AG04449 (cell line): ENCODE measurements at regions of chr15 and their contacts with region 1.

Region 1: DNA sequence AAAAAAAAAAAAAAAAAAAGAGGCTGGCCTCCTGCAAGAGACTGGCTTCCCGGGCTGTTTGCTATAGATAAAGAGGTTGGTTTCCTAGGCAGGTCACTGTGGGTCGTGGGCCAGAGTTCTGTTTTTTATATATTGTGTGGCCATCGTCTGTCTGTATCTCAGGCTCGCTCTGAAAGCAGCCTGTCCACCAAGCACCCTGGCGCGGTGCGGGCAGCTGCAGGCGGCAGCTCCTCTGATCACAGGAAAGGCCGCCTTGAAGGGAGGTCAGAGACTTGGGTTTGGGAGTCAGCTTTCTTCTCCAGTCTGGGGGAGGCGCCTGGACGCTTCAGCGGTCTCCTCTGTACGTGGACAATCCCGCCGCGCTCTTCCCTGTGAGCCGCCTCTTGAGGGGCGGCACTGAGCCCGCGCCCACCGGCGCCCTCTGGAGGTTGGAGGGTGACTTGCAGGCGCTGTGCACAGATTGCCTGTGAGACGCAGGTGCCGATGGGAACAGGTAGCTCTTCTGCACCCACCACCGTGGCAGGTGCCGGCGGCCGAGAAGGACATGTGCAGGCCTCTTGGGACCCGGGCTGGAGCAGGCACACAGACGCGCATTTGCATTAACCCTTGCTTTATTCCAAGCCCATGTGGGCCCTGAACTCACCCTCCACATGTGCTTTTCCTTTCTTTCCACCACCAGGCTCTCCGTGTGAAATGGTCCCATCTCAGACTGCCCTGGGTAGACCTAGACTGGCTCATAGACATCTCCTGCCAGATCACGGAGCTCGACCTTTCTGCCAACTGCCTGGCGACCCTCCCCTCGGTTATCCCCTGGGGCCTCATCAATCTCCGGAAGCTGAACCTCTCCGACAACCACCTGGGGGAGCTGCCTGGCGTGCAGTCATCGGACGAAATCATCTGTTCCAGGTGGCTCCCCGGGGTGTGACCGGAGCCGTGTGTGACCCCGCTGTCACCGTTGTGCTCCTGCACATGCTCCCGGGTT is 89.3 kb downstream of the LRRK1 start:
- DNase-seq: no peak
- H3K4me3 ChIP-seq: peak overlapping the region; percentile 59
- CTCF ChIP-seq: peak; percentile 99

Region 2: GRCh38 chr15:100614918-100615317 is 393.5 kb before region 1 on chr15:
- CTCF ChIA-PET with region 1: interaction called, 14 read pairs
- POLR2A ChIA-PET with region 1: no interaction called
- DNase-seq: no peak
- H3K4me3 ChIP-seq: no peak overlapping the region
- CTCF ChIP-seq: no peak

Region 3: GRCh38 chr15:100759698-100760356 is 248.6 kb before region 1 on chr15:
- CTCF ChIA-PET with region 1: interaction called, 10 read pairs
- POLR2A ChIA-PET with region 1: no interaction called
- DNase-seq: no peak
- H3K4me3 ChIP-seq: no peak overlapping the region; the same call in 1 of the 2 replicates
- CTCF ChIP-seq: no peak

Region 4: GRCh38 chr15:100918034-100918689 is 90.3 kb before region 1 on chr15:
- CTCF ChIA-PET with region 1: interaction called, 757 read pairs
- POLR2A ChIA-PET with region 1: interaction called, 16 read pairs
- DNase-seq: no peak
- H3K4me3 ChIP-seq: peak overlapping the region; percentile 69
- CTCF ChIP-seq: peak; percentile 96

Region 5: DNA sequence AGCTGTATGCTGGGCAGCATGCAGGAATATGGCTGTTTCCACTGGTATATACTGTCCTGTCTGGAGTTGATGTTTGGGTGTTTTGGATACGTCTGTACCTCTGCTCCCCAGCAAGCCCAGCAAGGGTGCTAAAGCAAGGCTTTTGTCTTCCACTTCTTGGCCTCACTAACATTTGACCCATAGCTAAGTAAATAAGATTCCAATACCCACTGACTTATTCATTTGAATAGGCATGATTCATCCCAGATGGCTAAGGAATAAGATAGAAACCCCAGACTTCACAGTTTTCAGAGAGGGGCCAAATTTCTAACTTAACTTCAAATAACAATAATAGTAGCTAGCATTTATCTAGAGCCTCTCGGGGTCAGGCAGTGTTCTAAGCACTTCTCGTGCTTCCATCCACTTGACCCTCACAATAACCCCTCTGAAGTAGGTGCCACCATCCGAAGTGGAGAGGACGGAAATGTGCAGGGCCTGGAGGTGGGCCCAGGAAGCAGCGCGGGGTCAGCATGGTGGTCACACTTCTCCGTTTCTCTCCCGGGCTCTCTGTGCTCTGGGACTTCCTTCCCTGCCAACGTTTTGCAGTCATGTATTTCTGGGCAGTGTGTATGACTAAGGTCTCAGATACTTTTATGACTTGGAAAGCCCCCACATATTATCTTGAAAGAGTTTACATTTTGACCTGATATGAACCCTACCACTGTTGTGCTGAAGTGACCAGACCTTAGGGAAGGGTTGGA is 50.0 kb before region 1 on chr15:
- CTCF ChIA-PET with region 1: interaction called, 13 read pairs
- POLR2A ChIA-PET with region 1: no interaction called
- DNase-seq: no peak
- H3K4me3 ChIP-seq: no peak overlapping the region
- CTCF ChIP-seq: no peak

Region 6: DNA sequence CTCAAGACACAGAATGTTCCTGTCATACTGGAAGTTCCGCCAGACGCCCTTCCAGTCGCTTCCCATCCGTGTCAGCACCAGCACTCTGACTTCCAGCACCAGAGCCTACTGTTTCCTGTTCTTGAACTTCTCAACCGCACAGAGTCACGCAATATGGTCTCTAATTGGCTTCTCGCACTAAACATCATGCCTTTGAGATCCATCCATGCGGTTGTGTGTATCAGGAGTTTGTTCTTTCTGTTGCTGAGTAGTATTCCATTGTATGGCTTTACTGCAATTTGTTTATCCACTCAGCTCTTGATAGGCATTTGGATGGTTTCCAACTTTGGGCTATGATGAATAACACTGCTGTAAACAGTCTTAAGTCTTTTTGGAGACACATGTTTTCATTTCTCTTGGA is 22.8 kb after region 1 on chr15:
- CTCF ChIA-PET with region 1: interaction called, 126 read pairs
- POLR2A ChIA-PET with region 1: no interaction called
- DNase-seq: no peak
- H3K4me3 ChIP-seq: no peak overlapping the region
- CTCF ChIP-seq: no peak